Posterior cingulate gyrus (tissue), 11 donors: ENCODE measurements at regions of chr22 and their contacts with region 1.

Region 1: GRCh38 chr22:26172389-26172990 is 3.2 kb downstream of the SEZ6L start:
- DNase-seq: peak in 7 of 10 donors; percentile 42 to 88 (median 52)

Region 2: DNA sequence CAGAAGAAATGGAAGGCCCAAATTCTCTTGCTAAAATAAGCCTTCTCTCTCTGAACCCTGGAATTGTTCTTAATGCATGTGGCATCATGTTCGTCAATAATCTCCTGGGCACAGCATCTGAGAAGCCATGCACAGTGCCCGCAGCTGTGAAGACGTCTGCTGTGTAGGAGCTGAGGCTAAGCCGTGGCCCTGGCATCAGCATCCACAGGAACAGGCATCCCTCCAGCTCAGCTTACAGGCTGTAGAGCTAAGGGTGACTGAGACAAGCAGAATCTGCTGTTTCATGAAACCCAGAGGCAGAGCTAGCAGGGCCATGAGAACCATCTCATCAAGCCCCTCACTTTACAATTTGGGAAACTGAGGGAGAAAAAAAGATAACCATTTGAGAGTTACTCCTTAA is 57.4 kb after region 1 on chr22:
- intact Hi-C with region 1: loop called (anchors 10 kb)
- DNase-seq: peak in 6 of 10 donors; percentile 10 to 88 (median 61)